ENCODE measurements at regions of chr5 and their contacts with region 1.

Region 1: DNA sequence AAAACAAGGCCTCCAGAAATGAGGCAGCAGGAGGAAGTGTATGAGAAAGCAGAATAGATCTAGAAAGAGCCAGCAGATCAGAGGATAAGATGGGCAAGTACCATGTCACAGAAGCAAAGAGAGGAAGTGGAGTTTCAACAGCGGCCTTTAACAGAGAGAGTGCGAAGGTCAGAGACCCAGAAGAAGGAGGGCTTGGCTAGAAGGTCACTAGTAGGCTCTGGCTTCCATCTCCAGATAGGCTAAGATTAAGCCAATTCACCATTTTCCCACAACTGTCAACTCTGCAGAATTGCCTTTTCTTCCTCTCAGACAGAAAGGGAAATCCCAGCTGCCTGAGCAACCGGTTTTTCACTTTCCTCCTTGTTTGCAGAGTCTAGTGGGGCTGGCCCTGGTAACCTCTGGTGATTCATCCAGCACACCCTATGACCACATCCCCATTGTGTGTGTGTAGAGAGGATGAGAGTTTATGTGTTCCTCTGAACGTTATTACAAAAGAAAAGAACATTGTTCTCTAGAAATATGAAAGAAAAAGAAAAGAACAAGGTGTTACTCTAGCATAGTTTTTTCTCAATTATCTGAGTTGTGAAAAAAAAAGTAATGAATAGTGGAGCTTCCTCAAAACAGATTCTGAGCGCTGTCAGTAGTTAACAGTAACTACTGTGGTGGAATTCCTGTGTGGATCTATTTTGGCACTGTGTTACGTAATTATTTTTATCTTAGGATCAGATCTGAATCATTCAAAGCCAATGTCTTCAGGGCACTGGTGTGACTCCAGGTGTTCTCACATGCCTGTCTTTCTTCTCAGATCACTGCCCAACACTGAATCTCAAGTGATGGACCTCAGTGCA is 220.4 kb downstream of the ARRDC3 start:
- DNase-seq: peak in 2 of 9 donors; percentile 8 to 64
- ATAC-seq: peak; percentile 93
- H3K4me3 ChIP-seq: no peak overlapping the region
- H3K4me3 Mint-ChIP-seq: peak overlapping the region in 3 of 10 donors; percentile 0 to 46 (median 1)
- H3K27ac ChIP-seq: no peak overlapping the region
- H3K27ac Mint-ChIP-seq: peak overlapping the region in 4 of 9 donors; percentile 10 to 71 (median 35)
- H3K4me1 ChIP-seq: no peaks in the 10 kb centered on the region
- H3K4me1 Mint-ChIP-seq: peaks cover 5 to 24% (median 13%) of the 10 kb centered on the region in 7 donors
- H3K27me3 ChIP-seq: no peaks in the 10 kb centered on the region
- H3K27me3 Mint-ChIP-seq: no peaks in the 10 kb centered on the region

Region 2: DNA sequence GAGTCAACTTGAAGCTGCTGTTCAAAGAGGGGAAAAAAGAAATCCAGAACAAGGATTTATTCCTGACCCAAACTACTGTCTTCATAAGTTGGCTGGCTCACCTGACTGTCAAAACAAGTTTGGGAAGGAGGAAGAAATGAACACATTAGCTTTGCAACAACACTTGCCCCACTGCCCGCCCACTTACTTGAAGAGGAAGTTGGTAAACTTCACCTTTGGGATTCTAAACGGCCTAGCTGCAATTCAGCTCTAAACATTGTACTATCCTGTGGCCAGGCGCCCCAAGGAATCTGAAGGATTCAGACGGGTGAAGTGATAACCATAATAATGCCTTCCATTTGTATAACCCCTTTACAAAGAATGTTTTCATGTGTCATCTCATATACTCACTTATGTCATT is 21.0 kb after region 1 on chr5:
- CTCF ChIA-PET with region 1: no interaction called
- POLR2A ChIA-PET with region 1: no interaction called
- intact Hi-C with region 1: loop called in 1 of 2 experiments (anchors 2 kb)
- DNase-seq: no peak
- ATAC-seq: no peak
- H3K4me3 ChIP-seq: no peak overlapping the region
- H3K4me3 Mint-ChIP-seq: peak overlapping the region in 2 of 10 donors; percentile 13 to 39
- H3K27ac ChIP-seq: no peak overlapping the region
- H3K27ac Mint-ChIP-seq: no peak overlapping the region
- H3K4me1 ChIP-seq: no peaks in the 10 kb centered on the region
- H3K4me1 Mint-ChIP-seq: peaks cover 4 to 13% (median 10%) of the 10 kb centered on the region in 7 donors
- H3K27me3 ChIP-seq: no peaks in the 10 kb centered on the region
- H3K27me3 Mint-ChIP-seq: peaks cover 0 to 20% (median 10%) of the 10 kb centered on the region in 5 donors

Measured in naive thymus-derived CD4-positive, alpha-beta T cell (primary cell).